A673 (cell line): ENCODE measurements at regions of chr3 and their contacts with region 1.

Region 1: DNA sequence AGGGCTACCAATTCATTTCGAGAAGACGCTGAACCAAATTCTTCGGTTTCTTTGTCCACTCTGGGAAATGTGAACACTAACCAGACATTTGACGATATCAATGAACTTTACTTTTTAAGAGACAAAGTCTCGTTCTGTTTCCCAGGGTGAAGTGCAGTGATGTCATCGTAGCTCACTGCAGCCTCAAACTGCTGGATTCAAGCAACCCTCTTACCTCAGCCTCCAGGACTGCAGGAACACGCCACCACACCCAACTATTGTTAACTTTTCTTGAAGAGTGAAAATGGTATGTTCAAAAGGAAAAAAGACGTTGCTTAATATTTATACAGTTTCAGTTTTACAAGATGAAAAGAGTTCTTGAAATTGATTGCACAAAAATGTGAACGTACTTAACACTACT is 30.6 kb downstream of the MB21D2 start:
- DNase-seq: no peak
- H3K4me3 ChIP-seq: no peak overlapping the region
- H3K27ac ChIP-seq: no peak overlapping the region
- H3K4me1 ChIP-seq: peaks cover 74% of the 10 kb centered on the region
- H3K27me3 ChIP-seq: no peaks in the 10 kb centered on the region
- CTCF ChIP-seq: no peak

Region 2: GRCh38 chr3:192825657-192826200 is 61.3 kb before region 1 on chr3:
- CTCF ChIA-PET with region 1: no interaction called
- POLR2A ChIA-PET with region 1: no interaction called
- intact Hi-C with region 1: loop called (anchors 5 kb)
- DNase-seq: peak; percentile 84
- H3K4me3 ChIP-seq: no peak overlapping the region
- H3K27ac ChIP-seq: no peak overlapping the region
- H3K4me1 ChIP-seq: peaks cover 21% of the 10 kb centered on the region
- H3K27me3 ChIP-seq: no peaks in the 10 kb centered on the region
- CTCF ChIP-seq: peak; percentile 47; the same call in 1 of the 2 replicates

Region 3: GRCh38 chr3:192917404-192918274 is 30.6 kb after region 1 on chr3 and contains the start of gene MB21D2:
- CTCF ChIA-PET with region 1: interaction called, 3 read pairs
- POLR2A ChIA-PET with region 1: no interaction called
- intact Hi-C with region 1: loop called (anchors 2 kb)
- DNase-seq: peak; percentile 91
- H3K4me3 ChIP-seq: peak within 1 kb of the TSS; percentile 61
- H3K27ac ChIP-seq: peak within 1 kb of the TSS; percentile 86
- H3K4me1 ChIP-seq: peaks cover 26% of the 10 kb centered on the region
- H3K27me3 ChIP-seq: no peaks in the 10 kb centered on the region
- CTCF ChIP-seq: 0 out of 2 replicates have a peak, but pooled peaks have one; percentile 13
- total RNA-seq, gene MB21D2: 6.1 and 8.1 TPM in 2 replicates

Region 4: DNA sequence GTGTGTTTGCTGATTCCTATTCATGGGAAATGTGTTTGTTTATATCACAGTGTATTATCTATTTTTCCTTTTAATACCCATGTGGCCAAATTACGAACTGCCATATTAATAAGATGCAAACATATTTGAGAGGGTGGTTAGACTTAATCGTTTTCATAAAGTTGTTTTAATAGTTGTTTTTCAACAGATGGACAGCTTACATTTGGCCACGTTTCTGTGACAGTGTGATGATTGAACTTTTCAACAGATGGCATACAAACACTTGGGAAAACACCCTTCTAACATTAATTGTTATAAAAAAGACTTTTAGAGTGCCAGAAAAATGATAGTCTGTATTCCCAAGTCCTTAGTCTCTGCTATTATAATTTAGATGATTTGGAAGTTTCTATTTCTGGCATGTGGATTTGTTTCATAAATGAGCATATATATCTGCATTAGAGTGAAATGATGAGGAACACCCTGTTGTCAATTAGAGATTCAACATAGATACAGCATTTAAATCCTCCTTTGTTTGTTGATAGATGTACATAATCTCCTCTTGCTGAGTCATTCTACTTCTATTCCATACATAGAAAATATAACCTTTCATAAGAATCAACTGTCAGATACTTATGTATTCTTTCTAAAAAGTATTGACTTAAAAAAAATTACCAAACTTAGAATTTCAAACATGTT is 367.1 kb after region 1 on chr3:
- CTCF ChIA-PET with region 1: no interaction called
- POLR2A ChIA-PET with region 1: no interaction called
- intact Hi-C with region 1: no loop called
- DNase-seq: no peak
- H3K4me3 ChIP-seq: no peak overlapping the region
- H3K27ac ChIP-seq: no peak overlapping the region
- H3K4me1 ChIP-seq: no peaks in the 10 kb centered on the region
- H3K27me3 ChIP-seq: no peaks in the 10 kb centered on the region
- CTCF ChIP-seq: no peak